ENCODE measurements at regions of chr3 and their contacts with region 1.

Region 1: DNA sequence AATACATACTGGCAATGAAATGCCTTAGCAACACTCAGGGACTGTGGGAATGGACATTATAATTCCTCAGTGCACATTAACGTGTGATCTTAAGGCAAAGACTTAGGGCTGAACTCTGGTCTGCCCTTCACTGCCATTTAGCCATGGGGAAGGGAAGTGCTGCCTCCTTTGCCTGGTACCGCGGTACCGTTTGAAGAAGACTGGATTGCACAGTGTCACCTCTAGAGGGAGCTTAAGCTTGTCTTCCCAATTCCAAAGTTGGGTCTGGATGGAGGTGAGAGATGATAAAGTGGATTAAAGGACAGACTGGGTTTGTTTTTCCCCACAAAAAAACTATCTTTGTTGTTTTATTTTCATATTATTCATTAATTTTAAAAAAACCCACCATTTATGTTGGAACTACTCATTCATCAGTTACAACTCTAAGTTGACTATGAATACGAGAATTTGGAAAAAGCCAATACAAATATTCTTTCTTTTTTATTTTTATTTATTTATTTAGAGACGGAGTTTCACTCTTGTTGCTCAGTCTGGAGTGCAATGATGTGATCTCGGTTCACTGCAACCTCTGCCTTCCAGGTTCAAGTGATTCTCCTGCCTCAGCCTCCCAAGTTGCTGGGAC is 60.0 kb upstream of the SYN2 start:
- DNase-seq: peak; percentile 50
- H3K4me3 ChIP-seq: no peak overlapping the region
- H3K27ac ChIP-seq: no peak overlapping the region
- H3K4me1 ChIP-seq: no peaks in the 10 kb centered on the region
- H3K27me3 ChIP-seq: no peaks in the 10 kb centered on the region
- CTCF ChIP-seq: peak; percentile 74

Region 2: DNA sequence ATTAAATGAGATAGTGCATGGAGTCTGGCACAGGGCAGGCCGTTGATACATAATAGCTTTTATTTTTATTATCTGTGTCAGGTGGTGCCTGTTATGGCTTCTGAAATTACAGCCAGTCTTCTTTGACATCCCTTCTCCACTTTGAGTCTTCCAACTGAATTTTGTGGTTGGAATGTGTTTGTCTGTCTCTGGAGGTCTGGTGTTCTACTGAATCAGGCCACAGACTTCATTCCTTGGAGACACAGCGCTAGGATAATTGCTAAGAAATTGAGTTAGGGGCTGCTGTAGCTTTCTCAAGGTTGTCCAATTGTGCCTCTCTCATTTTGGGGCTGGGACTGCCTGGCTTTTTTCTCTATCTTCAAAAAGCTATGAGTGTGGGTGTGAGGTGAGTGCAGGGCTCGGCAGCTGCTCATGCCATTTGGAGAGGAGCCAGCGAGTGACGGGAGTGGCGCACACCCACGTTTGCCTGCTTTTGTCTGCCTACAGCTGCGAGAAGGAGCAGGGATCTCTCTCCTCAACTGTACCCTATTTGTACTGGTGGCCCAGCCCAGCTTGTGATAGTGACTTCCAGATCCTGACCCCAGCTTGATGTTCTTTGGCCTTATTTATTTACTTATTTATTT is 10.3 kb after region 1 on chr3:
- CTCF ChIA-PET with region 1: no interaction called
- POLR2A ChIA-PET with region 1: no interaction called
- intact Hi-C with region 1: no loop called
- DNase-seq: peak; percentile 13
- H3K4me3 ChIP-seq: no peak overlapping the region
- H3K27ac ChIP-seq: no peak overlapping the region
- H3K4me1 ChIP-seq: no peaks in the 10 kb centered on the region
- H3K27me3 ChIP-seq: peaks cover 11% of the 10 kb centered on the region
- CTCF ChIP-seq: no peak

Region 3: DNA sequence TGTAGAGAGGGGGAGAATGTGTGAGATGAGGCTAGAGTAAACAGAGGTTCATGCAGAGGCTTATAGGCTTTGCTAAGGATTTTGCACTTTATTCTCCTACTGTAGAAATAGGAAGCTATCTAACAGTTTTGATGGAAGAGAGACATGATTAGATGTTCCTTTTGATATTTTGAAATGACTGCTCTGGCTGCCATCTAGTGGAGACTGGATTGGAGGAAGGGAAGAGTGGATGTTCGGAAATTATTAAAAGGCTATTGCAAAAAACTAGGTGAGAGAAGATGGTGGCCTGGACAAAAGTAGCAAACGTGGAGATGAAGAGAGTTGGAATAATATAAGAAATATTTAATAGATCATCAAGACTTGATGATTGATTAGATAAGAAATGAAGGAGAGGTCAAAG is 102.2 kb after region 1 on chr3:
- CTCF ChIA-PET with region 1: no interaction called
- POLR2A ChIA-PET with region 1: no interaction called
- intact Hi-C with region 1: loop called (anchors 5 kb)
- DNase-seq: peak; percentile 36
- H3K4me3 ChIP-seq: no peak overlapping the region
- H3K27ac ChIP-seq: no peak overlapping the region
- H3K4me1 ChIP-seq: no peaks in the 10 kb centered on the region
- H3K27me3 ChIP-seq: peaks cover 44% of the 10 kb centered on the region
- CTCF ChIP-seq: peak; percentile 54

Region 4: DNA sequence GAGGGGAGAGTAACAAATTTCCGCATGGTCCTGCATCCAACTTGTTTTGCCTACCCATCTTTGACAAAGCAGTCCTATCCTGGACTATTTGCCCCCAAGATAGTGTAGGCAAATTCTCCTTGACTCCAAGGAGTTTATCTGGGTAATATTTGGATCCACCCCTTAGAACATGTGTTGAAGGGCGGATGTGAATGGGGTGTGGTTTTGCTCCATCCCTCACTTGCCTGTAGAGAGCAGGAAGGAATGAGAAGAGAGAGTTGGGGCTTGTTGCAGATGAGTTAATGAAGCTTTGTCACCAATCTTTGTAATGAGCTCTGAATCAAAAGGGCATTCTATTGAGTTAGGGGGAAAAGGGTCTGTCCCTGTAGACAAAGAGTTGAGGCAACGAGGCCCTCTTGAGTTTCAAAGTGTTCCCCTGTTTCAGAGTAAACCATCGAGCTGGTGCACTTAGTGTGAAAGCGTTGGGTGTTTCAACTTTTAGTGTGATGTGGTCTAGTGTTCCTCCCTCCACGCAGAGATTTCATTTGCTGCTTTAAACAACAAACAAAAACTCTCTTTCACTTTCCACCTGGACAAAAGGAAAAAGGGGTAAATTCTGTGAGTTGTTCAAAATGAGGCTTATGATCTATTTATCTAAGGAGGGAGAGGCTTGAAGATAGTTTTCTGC is 302.5 kb after region 1 on chr3:
- CTCF ChIA-PET with region 1: no interaction called
- POLR2A ChIA-PET with region 1: no interaction called
- intact Hi-C with region 1: no loop called
- DNase-seq: no peak
- H3K4me3 ChIP-seq: no peak overlapping the region
- H3K27ac ChIP-seq: no peak overlapping the region
- H3K4me1 ChIP-seq: no peaks in the 10 kb centered on the region
- H3K27me3 ChIP-seq: peaks cover 36% of the 10 kb centered on the region
- CTCF ChIP-seq: no peak

Region 5: GRCh38 chr3:12287727-12288191 is 343.6 kb after region 1 on chr3:
- CTCF ChIA-PET with region 1: no interaction called
- POLR2A ChIA-PET with region 1: no interaction called
- intact Hi-C with region 1: no loop called
- DNase-seq: no peak
- H3K4me3 ChIP-seq: peak overlapping the region; percentile 44
- H3K27ac ChIP-seq: no peak overlapping the region
- H3K4me1 ChIP-seq: no peaks in the 10 kb centered on the region
- H3K27me3 ChIP-seq: peaks cover 75% of the 10 kb centered on the region
- CTCF ChIP-seq: no peak

Measured in A673 (cell line).